ENCODE measurements at regions of chr2 and their contacts with region 1.

Region 1: GRCh38 chr2:3303583-3304406 is 73.8 kb downstream of the EIPR1 start:
- DNase-seq: peak; percentile 85
- H3K4me3 ChIP-seq: no peak overlapping the region
- H3K27ac ChIP-seq: peak overlapping the region; percentile 29
- H3K4me1 ChIP-seq: peaks cover 3% of the 10 kb centered on the region
- H3K27me3 ChIP-seq: no peaks in the 10 kb centered on the region
- CTCF ChIP-seq: peak; percentile 92 to 93
- POLR2A ChIP-seq: no peak

Region 2: DNA sequence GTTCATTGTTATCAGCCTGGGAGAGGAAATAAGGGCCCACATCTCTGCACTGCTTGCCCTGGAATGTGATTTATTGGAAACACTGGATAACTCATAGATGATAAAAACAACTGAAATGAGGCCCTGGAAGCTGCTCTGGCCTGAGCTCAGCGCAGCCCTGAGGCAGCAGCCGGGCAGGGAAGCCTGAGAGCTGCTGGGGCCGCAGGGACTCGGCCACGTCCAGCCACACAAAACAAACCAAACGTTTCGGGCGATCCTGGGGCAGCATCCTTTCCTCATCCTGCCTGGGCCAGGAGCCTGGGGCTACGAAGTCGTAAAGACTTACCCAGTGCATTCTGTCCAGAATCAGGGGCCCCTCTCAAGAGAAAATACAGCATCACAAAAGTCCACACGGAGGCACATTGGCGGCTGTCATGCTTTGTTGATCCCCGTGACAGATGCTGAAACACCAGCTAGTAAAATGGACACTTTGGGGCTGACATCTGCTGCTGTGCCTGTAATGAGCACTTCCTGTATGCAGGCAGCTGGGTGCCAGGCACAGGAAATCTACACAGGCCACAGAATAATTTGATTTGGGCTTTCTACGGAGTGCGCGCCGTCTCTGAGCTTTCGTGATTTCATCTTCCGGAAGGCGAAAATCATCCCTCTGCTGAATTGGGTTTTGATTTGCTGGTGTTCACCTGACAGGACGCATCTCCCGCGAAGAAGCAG is 176.7 kb before region 1 on chr2:
- CTCF ChIA-PET with region 1: no interaction called
- POLR2A ChIA-PET with region 1: no interaction called
- dilution Hi-C with region 1: no loop called
- intact Hi-C with region 1: loop called (anchors 5 kb)
- DNase-seq: peak; percentile 65
- H3K4me3 ChIP-seq: no peak overlapping the region
- H3K27ac ChIP-seq: no peak overlapping the region
- H3K4me1 ChIP-seq: peaks cover 2% of the 10 kb centered on the region
- H3K27me3 ChIP-seq: no peaks in the 10 kb centered on the region
- CTCF ChIP-seq: no peak
- POLR2A ChIP-seq: no peak

Region 3: GRCh38 chr2:3242747-3243369 is 60.9 kb before region 1 on chr2:
- CTCF ChIA-PET with region 1: no interaction called
- POLR2A ChIA-PET with region 1: no interaction called
- dilution Hi-C with region 1: no loop called
- intact Hi-C with region 1: no loop called
- DNase-seq: no peak
- H3K4me3 ChIP-seq: no peak overlapping the region
- H3K27ac ChIP-seq: no peak overlapping the region
- H3K4me1 ChIP-seq: no peaks in the 10 kb centered on the region
- H3K27me3 ChIP-seq: no peaks in the 10 kb centered on the region
- CTCF ChIP-seq: no peak
- POLR2A ChIP-seq: no peak